Right ventricle myocardium inferior (tissue), 1 donor: ENCODE measurements at regions of chr6 and their contacts with region 1.

Region 1: GRCh38 chr6:15293674-15294073 is 47.8 kb downstream of the JARID2 start:
- DNase-seq: no peak
- ATAC-seq: peak; percentile 85

Region 2: GRCh38 chr6:15255481-15255880 is 38.2 kb before region 1 on chr6:
- intact Hi-C with region 1: loop called (anchors 5 kb)
- DNase-seq: no peak
- ATAC-seq: no peak